ENCODE measurements at regions of chr7 and their contacts with region 1.

Region 1: GRCh38 chr7:30062591-30062990 is 34.4 kb downstream of the PLEKHA8 start:
- DNase-seq: no peak
- ATAC-seq: peak; percentile 90

Region 2: DNA sequence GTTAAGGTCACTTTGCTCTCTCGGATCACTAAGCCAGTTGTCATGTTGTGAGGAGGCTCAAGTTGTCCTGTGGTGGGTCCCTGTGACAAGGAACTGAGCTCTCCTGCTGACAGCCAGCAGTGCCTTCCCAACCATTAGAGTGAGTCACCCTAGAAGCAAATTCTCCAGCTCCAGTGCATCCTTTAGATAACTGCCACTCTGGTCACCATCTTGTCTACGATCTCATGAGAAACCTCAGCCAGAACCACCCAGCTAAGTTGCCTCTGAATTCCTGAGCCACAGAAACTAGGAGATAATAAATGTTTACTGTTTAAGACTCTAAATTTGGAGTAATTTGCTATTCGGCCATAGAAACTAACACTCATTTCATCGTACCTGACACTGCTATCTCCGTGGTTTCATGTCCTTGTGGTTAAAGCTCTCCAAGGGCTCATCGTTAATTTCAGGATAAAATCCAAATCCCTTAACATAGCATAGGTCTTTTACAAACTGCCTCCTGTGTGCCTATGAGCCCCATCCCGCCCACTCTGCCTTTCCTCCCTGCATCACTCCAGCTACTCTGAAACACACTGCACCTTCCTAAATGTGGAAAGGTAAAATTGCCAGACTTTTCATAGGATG is 312.8 kb before region 1 on chr7:
- intact Hi-C with region 1: loop called (anchors 10 kb)
- DNase-seq: no peak
- ATAC-seq: no peak

Region 3: DNA sequence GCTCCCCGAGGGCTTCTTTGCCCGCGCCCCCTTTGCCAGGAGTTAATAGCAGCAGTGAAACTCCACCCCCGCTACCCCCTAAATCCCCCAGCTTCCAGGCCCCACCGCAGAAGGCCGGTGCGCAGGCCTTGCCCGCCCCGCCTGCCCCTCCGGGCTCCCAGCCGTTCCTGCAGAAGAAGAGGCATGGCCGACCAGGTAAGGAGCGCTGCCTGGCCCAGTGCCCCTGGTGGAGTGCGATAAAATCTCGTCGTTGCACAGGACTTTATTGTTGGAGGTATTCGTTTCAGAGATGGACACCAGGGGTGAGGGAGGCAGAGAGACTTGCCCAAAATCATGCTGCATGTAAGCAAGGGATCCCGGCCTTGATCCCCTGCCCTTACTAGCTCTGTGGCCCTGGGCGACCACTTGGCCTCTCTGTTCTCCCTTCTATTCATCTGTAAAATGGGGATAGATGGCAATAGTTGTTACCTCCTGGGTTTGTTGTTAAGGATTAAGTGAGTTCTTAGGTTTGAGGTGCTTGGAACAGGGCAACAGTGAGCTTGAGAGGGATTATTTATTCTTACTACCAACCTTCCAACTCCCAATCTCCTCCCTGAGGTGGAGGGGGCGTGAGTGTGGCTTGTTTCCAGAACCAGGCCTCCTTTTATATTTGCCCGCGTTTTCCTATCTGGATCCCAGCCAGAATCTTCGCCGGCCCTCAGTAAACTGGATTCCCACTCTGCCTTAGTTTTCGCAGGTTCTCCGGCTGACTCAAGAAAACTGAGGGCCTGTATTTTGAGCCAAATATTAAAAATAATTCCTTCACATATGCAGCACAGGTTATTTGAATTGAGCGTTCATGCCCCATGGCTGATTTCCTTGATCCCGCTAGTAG is 178.0 kb before region 1 on chr7:
- intact Hi-C with region 1: loop called (anchors 10 kb)
- DNase-seq: no peak
- ATAC-seq: no peak

Region 4: DNA sequence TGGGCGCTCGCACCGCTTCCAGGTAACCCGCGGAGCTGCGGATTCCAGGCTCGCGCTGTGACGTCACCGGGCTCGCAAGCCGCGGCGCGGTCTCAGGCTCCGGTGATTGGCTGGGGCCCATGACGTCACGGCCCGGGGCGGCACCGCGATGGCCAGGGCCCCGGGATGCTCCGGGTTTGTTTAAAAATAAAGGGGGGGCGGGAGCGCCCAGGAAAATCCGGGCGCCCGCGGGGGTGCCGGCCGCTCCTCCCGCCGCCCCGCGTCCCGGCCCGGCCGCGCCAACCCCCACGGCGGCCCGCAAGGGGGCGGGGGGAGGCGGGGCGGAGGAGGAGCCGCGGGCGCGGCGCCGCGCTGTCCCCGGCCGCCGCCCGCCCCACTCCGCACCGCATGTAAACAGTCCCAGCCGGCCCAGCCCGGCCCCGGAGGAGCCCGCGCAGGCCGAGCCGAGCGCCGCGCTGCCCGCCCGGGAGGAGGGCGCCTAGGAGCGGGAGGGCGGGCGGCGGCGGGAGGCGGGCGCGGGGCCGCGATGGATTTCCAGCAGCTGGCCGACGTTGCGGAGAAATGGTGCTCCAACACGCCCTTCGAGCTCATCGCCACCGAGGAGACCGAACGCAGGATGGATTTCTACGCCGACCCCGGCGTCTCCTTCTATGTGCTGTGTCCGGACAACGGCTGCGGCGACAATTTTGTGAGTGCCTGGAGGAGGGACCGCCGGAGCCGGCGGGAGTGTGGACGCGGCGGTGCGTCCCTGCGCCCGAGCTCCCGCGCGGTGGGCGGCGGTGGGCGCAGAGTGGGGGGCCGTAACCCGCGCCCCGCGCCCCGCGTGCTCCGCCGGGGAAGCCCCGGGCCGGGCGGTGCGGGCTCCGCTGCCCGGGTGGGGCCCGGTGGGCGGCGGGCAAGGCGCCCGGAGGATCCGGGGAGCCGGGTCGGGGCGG is 72.3 kb after region 1 on chr7 and contains the start of gene MTURN:
- intact Hi-C with region 1: no loop called
- DNase-seq: peak; percentile 93
- ATAC-seq: peak; percentile 87
- total RNA-seq, gene MTURN: 189 TPM